Activated CD4-positive, alpha-beta memory T cell treated with anti-CD3 and anti-CD28 coated beads for 36 hours (primary cell): ENCODE measurements at regions of chr3 and their contacts with region 1.

Region 1: DNA sequence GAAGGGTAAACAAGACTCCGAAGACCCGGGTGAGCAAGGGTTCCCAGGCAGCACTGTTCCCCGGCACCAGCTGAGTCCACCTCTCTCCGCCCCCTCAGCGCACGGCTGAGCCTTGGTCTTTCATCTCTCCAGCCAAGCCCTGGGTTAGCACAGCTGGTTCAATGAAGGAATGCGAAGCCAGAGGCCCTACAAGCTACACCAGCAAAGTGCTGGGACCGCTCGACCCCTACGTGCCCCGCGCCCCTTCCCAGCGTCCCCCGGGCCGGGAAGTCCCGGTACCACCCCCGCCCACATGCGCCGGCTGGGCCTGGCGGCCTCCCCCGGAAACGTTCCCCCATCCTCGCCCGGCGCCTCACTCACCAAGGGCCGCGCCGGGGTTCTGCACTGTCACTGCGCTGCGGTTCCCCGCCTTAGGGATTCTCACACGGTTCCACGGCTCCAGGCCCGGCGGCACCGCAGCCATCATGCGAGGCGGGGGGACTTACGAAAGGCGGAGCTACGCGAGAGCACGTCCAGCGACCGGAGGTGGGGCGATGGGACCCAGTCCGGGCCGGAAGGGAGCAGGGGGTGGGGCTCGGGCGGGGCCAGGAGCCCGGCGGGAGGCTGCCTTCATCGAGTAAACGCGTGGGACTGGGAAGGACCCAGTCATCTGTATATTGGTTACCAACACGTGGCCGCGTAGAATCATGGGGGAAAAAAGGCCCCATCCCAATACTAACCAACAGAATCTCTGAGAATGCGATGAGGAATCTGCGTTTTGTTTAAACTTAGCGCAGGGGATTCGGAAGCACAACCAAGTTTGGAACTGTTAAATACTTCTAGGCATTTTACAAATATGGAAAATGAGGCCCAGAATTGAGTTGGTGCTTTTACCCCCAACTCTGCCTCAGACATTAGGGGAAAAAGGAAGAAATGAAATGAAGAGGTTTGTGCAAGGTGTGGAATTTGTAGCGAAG is 28.7 kb downstream of the GTPBP8 start:
- DNase-seq: peak; percentile 95
- H3K4me3 Mint-ChIP-seq: peak overlapping the region; percentile 93
- H3K27ac Mint-ChIP-seq: peak overlapping the region; percentile 97
- H3K4me1 Mint-ChIP-seq: peaks cover 55% of the 10 kb centered on the region
- H3K27me3 Mint-ChIP-seq: no peaks in the 10 kb centered on the region

Region 2: DNA sequence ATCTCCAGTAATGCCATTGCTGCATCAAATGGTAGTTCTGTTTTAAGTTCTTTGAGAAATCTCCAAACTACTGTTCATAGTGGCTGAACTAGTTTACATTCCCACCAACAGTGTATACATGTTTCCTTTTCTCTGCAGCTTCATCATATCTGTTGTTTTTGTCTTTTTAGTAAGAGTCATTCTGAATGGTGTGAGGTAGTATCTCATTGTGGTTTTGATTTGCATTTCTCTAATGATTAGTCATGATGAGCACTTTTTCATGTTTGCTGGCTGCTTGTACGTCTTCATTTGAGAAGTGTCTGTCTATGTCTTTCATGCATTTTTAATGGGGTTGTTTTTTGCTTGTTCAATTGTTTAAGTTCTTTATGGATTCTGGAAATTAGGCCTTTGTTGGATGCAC is 876.2 kb before region 1 on chr3:
- CTCF ChIA-PET with region 1: no interaction called
- POLR2A ChIA-PET with region 1: no interaction called
- intact Hi-C with region 1: loop called (anchors 2 kb)
- DNase-seq: no peak
- H3K4me3 Mint-ChIP-seq: peak overlapping the region; percentile 53
- H3K27ac Mint-ChIP-seq: peak overlapping the region; percentile 77
- H3K4me1 Mint-ChIP-seq: peaks cover 30% of the 10 kb centered on the region
- H3K27me3 Mint-ChIP-seq: no peaks in the 10 kb centered on the region

Region 3: GRCh38 chr3:112814266-112814665 is 205.2 kb before region 1 on chr3:
- CTCF ChIA-PET with region 1: no interaction called
- POLR2A ChIA-PET with region 1: no interaction called
- intact Hi-C with region 1: no loop called
- DNase-seq: no peak
- H3K4me3 Mint-ChIP-seq: no peak overlapping the region
- H3K27ac Mint-ChIP-seq: no peak overlapping the region
- H3K4me1 Mint-ChIP-seq: peaks cover 20% of the 10 kb centered on the region
- H3K27me3 Mint-ChIP-seq: no peaks in the 10 kb centered on the region

Region 4: DNA sequence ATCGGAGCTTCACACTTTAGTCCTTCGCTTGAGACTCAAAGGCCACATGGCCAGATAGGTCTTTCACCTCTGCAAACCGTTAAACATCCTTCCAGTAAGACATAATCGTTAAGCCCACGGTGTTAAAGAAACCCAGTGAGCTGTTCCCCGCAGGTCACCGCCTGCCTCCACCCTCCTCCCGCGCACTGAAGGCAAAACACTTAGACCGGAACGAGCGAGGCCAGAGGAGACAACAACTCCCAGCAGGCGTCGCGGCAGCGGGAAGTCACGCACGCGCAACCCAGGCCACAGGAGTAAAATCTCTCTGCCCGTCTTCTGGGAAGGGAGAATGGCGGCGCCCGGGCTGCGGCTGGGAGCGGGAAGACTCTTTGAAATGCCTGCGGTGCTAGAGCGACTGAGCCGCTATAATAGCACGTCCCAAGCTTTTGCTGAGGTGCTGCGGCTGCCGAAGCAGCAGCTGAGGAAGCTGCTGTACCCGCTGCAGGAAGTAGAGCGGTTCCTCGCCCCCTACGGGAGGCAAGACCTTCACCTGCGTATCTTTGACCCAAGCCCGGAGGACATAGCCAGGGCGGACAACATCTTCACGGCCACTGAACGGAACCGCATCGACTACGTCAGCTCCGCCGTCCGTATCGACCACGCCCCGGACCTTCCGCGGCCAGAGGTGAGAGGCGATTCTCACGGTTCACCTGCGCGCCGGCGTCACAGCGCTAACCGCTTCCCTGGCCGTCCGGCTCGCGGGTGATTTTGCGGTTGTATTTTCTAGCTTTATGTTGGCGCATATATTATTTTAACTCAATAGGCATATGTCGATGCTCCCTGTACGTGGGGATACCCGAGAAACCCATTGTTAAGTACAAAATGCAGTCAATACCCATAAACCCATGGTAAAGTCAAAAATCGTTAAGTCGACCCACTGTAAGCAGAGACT is 28.5 kb before region 1 on chr3 and contains the start of gene GTPBP8:
- CTCF ChIA-PET with region 1: interaction called, 8 read pairs
- POLR2A ChIA-PET with region 1: interaction called, 15 read pairs
- intact Hi-C with region 1: loop called (anchors 1 kb)
- DNase-seq: peak; percentile 93
- H3K4me3 Mint-ChIP-seq: peak within 1 kb of the TSS; percentile 91
- H3K27ac Mint-ChIP-seq: peak within 1 kb of the TSS; percentile 94
- H3K4me1 Mint-ChIP-seq: peaks cover 57% of the 10 kb centered on the region
- H3K27me3 Mint-ChIP-seq: no peaks in the 10 kb centered on the region
- total RNA-seq, gene GTPBP8: 34.7 to 35.7 TPM

Region 5: GRCh38 chr3:113002679-113003078 is 16.8 kb before region 1 on chr3:
- CTCF ChIA-PET with region 1: interaction called, 4 read pairs
- POLR2A ChIA-PET with region 1: interaction called, 28 read pairs
- intact Hi-C with region 1: loop called (anchors 1 kb)
- DNase-seq: peak; percentile 81
- H3K4me3 Mint-ChIP-seq: no peak overlapping the region
- H3K27ac Mint-ChIP-seq: peak overlapping the region; percentile 84
- H3K4me1 Mint-ChIP-seq: peaks cover 68% of the 10 kb centered on the region
- H3K27me3 Mint-ChIP-seq: no peaks in the 10 kb centered on the region

Region 6: DNA sequence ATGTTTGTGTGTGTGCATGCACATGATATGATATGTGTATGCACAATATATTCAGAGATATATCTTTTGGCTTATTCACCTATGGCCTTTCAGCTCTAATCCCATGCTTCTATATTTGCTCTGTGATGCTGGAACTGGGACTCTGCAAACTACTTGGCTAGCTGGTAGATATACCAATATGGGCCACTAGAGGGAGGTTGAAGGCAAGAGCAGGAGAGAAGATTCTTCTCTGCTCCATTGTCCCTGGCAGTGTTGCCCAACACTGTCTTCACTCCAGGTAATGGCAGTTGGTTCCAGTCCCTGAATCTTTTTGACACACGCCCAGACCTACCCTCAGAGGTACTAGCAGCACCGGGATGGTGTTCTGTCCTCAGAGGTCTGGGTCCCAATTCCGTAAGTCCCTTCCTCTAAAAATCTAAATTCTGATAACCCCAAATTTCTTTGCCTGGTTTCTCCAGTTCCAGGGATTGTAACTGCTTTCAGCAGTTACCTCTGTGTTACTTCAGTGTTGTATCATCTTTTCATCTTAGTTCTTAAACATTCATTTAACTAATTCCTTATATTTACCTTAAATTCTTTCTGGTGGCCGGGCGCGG is 16.0 kb after region 1 on chr3:
- CTCF ChIA-PET with region 1: interaction called, 41 read pairs
- POLR2A ChIA-PET with region 1: no interaction called
- intact Hi-C with region 1: no loop called
- DNase-seq: peak; percentile 17
- H3K4me3 Mint-ChIP-seq: no peak overlapping the region
- H3K27ac Mint-ChIP-seq: no peak overlapping the region
- H3K4me1 Mint-ChIP-seq: no peaks in the 10 kb centered on the region
- H3K27me3 Mint-ChIP-seq: no peaks in the 10 kb centered on the region

Region 7: GRCh38 chr3:113051302-113051711 is 31.8 kb after region 1 on chr3:
- CTCF ChIA-PET with region 1: no interaction called
- POLR2A ChIA-PET with region 1: no interaction called
- intact Hi-C with region 1: no loop called
- DNase-seq: peak; percentile 92
- H3K4me3 Mint-ChIP-seq: no peak overlapping the region
- H3K27ac Mint-ChIP-seq: no peak overlapping the region
- H3K4me1 Mint-ChIP-seq: peaks cover 5% of the 10 kb centered on the region
- H3K27me3 Mint-ChIP-seq: no peaks in the 10 kb centered on the region